ENCODE measurements at regions of chr5 and their contacts with region 1.

Region 1: GRCh38 chr5:113513384-113514288 is at the start of gene YTHDC2:
- DNase-seq: peak; percentile 90
- H3K4me3 Mint-ChIP-seq: peak within 1 kb of the TSS; percentile 91
- H3K27ac Mint-ChIP-seq: peak within 1 kb of the TSS; percentile 88
- H3K4me1 Mint-ChIP-seq: peaks cover 27% of the 10 kb centered on the region
- H3K27me3 Mint-ChIP-seq: peaks cover 5% of the 10 kb centered on the region
- total RNA-seq, gene YTHDC2: 24.4 to 28.0 TPM

Region 2: GRCh38 chr5:112707187-112708102 is 806.2 kb before region 1 on chr5:
- CTCF ChIA-PET with region 1: no interaction called
- intact Hi-C with region 1: loop called (anchors 5 kb)
- DNase-seq: peak; percentile 98
- H3K4me3 Mint-ChIP-seq: peak overlapping the region; percentile 91
- H3K27ac Mint-ChIP-seq: peak overlapping the region; percentile 89
- H3K4me1 Mint-ChIP-seq: peaks cover 48% of the 10 kb centered on the region
- H3K27me3 Mint-ChIP-seq: no peaks in the 10 kb centered on the region

Region 3: DNA sequence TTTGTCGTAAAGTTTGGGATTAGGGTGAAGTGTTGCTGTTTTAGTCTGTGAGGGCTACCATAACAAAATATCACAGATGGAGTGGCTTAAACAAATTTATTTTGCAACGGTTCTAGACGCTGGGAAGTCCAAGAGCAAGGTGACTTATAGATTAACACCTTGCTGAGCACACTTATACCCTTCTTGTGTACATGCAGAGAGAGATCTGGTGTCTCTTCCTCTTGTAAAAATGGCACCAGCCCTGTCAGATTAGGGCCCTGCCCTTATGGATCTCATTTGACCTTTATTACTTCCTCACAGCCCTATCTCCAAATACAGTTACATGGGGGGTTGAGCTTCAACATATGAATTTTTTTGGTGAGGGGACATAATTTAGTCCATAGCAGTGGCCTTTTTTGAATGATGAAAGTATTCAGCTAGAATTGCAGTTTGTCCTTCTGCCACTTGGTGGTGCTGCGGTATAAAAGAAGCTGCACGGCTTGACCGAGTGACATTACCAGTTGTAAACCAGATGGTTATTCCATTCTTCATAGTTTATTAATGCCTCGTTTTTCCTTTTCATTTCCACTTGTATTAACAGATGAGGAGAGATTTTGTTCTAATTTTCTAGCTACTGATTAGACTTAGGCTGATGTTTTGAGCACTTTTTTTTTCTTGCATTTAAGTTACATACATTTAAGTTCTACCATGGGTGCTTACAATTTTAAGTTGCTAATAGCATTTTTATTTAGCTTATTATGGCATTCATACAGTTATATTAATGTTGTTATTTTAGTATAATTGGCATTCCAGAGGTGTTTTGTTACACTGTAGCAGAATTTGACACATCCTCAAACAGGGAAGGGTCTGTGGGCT is 517.6 kb before region 1 on chr5:
- CTCF ChIA-PET with region 1: interaction called, 6 read pairs
- intact Hi-C with region 1: loop called (anchors 2 kb)
- DNase-seq: peak; percentile 85
- H3K4me3 Mint-ChIP-seq: no peak overlapping the region
- H3K27ac Mint-ChIP-seq: no peak overlapping the region
- H3K4me1 Mint-ChIP-seq: peaks cover 14% of the 10 kb centered on the region
- H3K27me3 Mint-ChIP-seq: no peaks in the 10 kb centered on the region

Region 4: GRCh38 chr5:113059232-113060040 is 454.2 kb before region 1 on chr5:
- CTCF ChIA-PET with region 1: no interaction called
- intact Hi-C with region 1: loop called (anchors 5 kb)
- DNase-seq: no peak
- H3K4me3 Mint-ChIP-seq: no peak overlapping the region
- H3K27ac Mint-ChIP-seq: no peak overlapping the region
- H3K4me1 Mint-ChIP-seq: peaks cover 30% of the 10 kb centered on the region
- H3K27me3 Mint-ChIP-seq: no peaks in the 10 kb centered on the region

Region 5: GRCh38 chr5:113336975-113337374 is 176.7 kb before region 1 on chr5:
- CTCF ChIA-PET with region 1: interaction called, 30 read pairs
- intact Hi-C with region 1: loop called (anchors 1 kb)
- DNase-seq: no peak
- H3K4me3 Mint-ChIP-seq: no peak overlapping the region
- H3K27ac Mint-ChIP-seq: no peak overlapping the region
- H3K4me1 Mint-ChIP-seq: peaks cover 6% of the 10 kb centered on the region
- H3K27me3 Mint-ChIP-seq: peaks cover 7% of the 10 kb centered on the region

Region 6: DNA sequence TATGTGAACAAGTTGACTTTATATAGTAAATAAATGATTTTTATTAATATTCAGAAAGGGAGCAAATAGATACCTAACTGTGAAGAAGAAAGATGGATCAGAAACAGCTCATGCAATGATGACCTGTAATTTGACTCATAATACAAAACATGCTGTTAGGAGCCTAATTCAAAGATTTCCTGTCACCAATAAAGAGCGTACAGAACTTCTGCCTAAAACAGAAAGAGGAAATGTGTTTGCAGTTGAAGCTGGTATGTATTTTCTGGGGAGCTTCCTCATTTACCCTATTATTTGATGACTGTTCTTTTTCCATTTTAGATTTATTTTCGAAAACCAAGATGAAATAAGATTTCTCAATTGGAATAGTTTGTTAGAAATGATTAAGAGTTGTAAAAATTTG is 11.3 kb after region 1 on chr5:
- CTCF ChIA-PET with region 1: interaction called, 6 read pairs
- intact Hi-C with region 1: loop called (anchors 1 kb)
- DNase-seq: no peak
- H3K4me3 Mint-ChIP-seq: peak overlapping the region; percentile 21
- H3K27ac Mint-ChIP-seq: peak overlapping the region; percentile 47
- H3K4me1 Mint-ChIP-seq: peaks cover 37% of the 10 kb centered on the region
- H3K27me3 Mint-ChIP-seq: no peaks in the 10 kb centered on the region

Region 7: GRCh38 chr5:114062932-114063874 is 549.6 kb after region 1 on chr5:
- CTCF ChIA-PET with region 1: no interaction called
- intact Hi-C with region 1: no loop called
- DNase-seq: no peak
- H3K4me3 Mint-ChIP-seq: no peak overlapping the region
- H3K27ac Mint-ChIP-seq: no peak overlapping the region
- H3K4me1 Mint-ChIP-seq: no peaks in the 10 kb centered on the region
- H3K27me3 Mint-ChIP-seq: peaks cover 12% of the 10 kb centered on the region